ENCODE measurements at regions of chr7 and their contacts with region 1.

Region 1: GRCh38 chr7:97179454-97180104 is 62.1 kb downstream of the SDHAF3 start:
- DNase-seq: no peak

Region 2: DNA sequence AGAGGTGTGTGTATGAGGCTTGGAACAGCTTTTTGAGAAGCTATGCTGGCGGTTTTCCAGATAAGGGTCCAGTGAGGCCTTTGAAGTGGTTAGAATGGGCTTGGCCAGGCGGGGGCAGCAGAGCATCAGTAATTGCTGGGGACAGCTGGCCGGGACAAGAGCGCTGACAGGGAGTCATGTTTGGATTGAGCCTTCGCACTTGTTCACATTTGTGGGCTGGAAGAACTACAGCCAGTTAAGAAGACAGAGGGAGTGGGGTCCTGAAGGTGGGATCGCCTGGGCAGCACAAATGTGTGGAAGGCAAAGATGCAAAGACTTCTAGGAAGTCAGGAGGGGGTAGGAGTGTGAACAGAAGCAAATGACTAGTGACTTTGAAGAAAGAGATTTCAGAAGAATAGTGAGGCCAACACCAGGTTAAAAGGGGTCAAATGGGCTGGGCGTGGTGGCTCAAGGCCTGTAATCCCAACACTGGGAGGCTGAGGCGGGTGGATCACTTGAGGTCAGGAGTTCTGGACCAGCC is 74.8 kb before region 1 on chr7:
- intact Hi-C with region 1: loop called (anchors 2 kb)
- DNase-seq: peak; percentile 90

Region 3: DNA sequence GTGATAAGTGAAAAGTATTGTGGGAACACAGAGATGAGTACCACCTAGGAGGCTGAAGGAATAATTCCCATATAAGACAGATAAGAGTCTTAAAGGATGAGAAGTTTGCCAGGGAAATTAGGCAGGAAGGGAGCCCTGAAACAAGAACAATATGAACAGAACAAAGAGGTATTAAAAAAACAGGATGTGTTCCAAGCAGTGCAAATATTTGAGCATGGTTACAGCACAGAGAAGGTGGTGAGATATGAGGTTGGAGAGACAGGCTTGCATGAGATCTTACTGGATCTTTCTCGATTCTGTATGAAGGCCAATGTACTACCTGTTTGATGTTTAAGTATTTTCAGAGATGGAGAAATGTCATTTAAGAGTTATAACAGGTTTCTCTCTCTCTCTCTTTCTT is 572.6 kb after region 1 on chr7:
- intact Hi-C with region 1: no loop called
- DNase-seq: no peak